Activated CD8-positive, alpha-beta T cell treated with anti-CD3 and anti-CD28 coated beads, Interleukin-2, amount 10 ng/mL, durations not matched to agents 7 days and 5 days (primary cell): ENCODE measurements at regions of chr1 and their contacts with region 1.

Region 1: GRCh38 chr1:23743287-23744052 is at the start of gene ELOA:
- DNase-seq: peak; percentile 85
- ATAC-seq: peak; percentile 94
- H3K4me3 Mint-ChIP-seq: peak within 1 kb of the TSS; percentile 93
- H3K27ac Mint-ChIP-seq: peak within 1 kb of the TSS; percentile 90
- H3K4me1 Mint-ChIP-seq: peaks cover 45% of the 10 kb centered on the region
- H3K27me3 Mint-ChIP-seq: no peaks in the 10 kb centered on the region
- total RNA-seq, gene ELOA: 29.2 to 31.0 TPM

Region 2: GRCh38 chr1:23533246-23534023 is 210.0 kb before region 1 on chr1:
- CTCF ChIA-PET with region 1: no interaction called
- POLR2A ChIA-PET with region 1: no interaction called
- DNase-seq: no peak
- ATAC-seq: no peak
- H3K4me3 Mint-ChIP-seq: no peak overlapping the region
- H3K27ac Mint-ChIP-seq: peak overlapping the region; percentile 35
- H3K4me1 Mint-ChIP-seq: peaks cover 42% of the 10 kb centered on the region
- H3K27me3 Mint-ChIP-seq: no peaks in the 10 kb centered on the region

Region 3: DNA sequence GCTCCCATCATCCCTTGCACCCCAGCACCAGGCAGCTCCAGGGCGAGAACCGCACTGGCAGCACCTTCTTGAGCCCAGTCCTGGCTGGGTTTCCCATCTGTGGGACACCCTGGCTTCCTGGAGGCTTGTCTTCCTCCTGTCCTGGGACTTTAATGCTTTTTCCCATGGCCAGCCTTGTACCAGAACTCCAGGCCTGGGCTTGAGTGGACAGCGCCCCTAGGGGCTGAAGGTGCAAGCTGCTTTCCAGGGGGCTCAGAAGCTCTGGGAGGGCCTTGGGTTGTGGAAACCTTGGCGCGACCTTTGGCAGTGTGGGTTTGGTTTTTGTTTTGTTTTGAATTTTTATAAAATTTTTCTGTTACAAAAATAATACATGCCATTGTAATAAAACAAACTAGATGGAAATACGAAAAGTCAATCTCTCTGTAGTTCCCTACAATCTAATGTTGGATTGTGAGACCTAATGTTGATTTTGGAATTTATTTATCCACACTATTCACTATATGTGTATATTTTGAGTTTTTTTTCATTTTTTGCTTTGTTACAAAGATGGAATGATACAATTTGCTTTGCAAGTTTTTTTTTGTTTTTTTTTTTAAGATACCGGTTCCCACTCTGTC is 85.7 kb before region 1 on chr1:
- CTCF ChIA-PET with region 1: no interaction called
- POLR2A ChIA-PET with region 1: no interaction called
- DNase-seq: peak; percentile 60
- ATAC-seq: peak; percentile 88
- H3K4me3 Mint-ChIP-seq: no peak overlapping the region
- H3K27ac Mint-ChIP-seq: no peak overlapping the region
- H3K4me1 Mint-ChIP-seq: no peaks in the 10 kb centered on the region
- H3K27me3 Mint-ChIP-seq: peaks cover 5% of the 10 kb centered on the region

Region 4: GRCh38 chr1:23691499-23692307 is 51.8 kb before region 1 on chr1 and contains the start of gene RPL11:
- CTCF ChIA-PET with region 1: interaction called, 28 read pairs
- POLR2A ChIA-PET with region 1: interaction called, 16 read pairs
- DNase-seq: peak; percentile 91
- ATAC-seq: peak; percentile 96
- H3K4me3 Mint-ChIP-seq: peak within 1 kb of the TSS; percentile 98
- H3K27ac Mint-ChIP-seq: peak within 1 kb of the TSS; percentile 94
- H3K4me1 Mint-ChIP-seq: peaks cover 47% of the 10 kb centered on the region
- H3K27me3 Mint-ChIP-seq: peaks cover 2% of the 10 kb centered on the region
- total RNA-seq, gene RPL11: 1,096 to 1,128 TPM

Region 5: GRCh38 chr1:23784846-23785245 is 41.4 kb after region 1 on chr1:
- CTCF ChIA-PET with region 1: no interaction called
- POLR2A ChIA-PET with region 1: no interaction called
- DNase-seq: no peak
- ATAC-seq: no peak
- H3K4me3 Mint-ChIP-seq: no peak overlapping the region
- H3K27ac Mint-ChIP-seq: no peak overlapping the region
- H3K4me1 Mint-ChIP-seq: peaks cover 16% of the 10 kb centered on the region
- H3K27me3 Mint-ChIP-seq: no peaks in the 10 kb centered on the region